Left cardiac atrium (tissue), 4 donors: ENCODE measurements at regions of chr14 and their contacts with region 1.

Region 1: DNA sequence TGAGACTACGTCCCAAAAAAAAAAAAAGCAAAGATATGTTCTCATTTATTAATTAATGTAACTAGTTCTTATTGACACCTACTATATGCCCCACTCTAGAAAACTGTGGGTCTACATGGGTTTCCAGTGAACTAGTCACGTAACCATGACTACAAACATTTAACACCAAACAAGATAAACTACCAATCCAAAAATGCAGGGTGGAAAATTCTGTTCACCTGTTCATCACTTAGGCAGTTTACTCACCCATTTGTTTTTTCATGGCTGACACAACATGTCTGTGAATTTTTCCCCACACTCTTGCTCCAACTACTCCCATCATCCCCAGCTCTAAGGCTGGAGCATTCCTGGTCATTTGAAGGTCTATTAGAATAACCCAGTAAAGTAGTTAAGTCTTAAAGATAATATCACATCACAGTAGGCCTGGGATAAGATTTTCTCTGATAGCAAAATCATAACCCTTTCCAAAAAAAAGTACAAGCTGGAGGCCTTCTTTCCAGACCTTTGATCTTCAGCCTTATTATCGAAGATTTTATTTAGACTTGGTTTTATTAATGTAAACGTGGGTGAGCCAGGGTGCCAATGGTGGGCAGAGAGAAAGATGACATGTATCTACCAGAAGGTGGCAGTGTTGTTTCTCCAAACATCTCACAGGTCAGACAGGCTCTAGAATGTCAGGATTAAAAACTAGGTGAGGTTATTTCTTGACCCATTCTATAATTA is 61.6 kb upstream of the DAAM1 start:
- DNase-seq: no peak
- ATAC-seq: peak; percentile 83 to 89

Region 2: GRCh38 chr14:58501214-58501816 is 625.6 kb before region 1 on chr14:
- intact Hi-C with region 1: loop called in 1 of 2 experiments (anchors 2 kb)
- DNase-seq: no peak
- ATAC-seq: peak; percentile 54 to 59

Region 3: GRCh38 chr14:58637391-58638230 is 489.3 kb before region 1 on chr14 and contains the start of gene DACT1:
- intact Hi-C with region 1: loop called in 1 of 2 experiments (anchors 10 kb)
- DNase-seq: peak; percentile 79
- ATAC-seq: peak; percentile 83 to 87
- total RNA-seq, gene DACT1: 7.0 to 10.3 TPM

Region 4: GRCh38 chr14:59262717-59263454 is 136.0 kb after region 1 on chr14:
- intact Hi-C with region 1: no loop called
- DNase-seq: no peak
- ATAC-seq: peak; percentile 31 to 50

Region 5: DNA sequence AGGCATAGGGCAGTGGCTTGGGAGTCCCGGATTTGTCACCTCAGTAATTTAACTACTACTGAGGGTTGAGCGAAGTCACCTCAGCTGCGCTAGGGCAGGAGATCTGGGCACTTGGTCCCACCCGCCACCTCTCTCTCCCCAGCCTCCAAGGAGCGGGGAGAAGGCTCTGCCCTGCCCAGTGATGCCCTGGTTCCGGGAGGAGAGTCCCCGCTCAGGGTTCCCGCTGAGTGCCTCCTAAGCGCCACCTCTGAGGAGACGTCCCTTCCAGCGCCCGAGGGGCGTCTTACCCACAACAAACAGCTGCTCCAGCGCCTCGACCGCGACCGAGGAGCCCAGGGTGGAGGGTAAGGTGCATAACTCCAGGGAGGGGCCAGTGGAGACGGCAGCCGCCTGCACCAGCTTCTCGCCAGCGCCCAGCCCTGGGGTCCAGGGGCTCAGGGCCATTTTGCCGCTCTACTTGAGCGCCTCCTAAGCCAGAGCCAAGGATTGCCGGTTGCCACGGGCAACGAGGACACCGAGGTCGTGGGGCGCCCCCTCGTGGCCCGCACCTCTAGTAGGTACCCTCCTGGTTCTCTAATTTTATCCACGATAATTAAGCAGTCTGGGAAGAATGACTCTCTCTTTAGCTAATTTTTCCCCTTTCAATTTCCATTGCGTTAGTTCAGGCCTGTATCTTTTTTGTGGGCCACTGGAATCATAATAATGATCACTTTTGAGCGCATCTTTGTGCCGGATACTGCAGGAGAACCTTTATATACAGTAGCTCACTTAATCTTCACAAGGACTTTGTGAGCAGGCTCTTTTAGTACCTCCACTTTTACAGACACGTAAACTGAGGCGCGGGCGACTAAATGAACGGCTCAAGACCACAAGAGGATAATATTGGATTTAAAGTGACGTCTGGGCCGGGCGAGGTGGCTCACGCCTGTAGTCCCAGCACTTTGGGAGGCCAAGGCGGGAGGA is 449.7 kb after region 1 on chr14 and contains the start of gene CCDC175:
- intact Hi-C with region 1: loop called in 1 of 2 experiments (anchors 10 kb)
- DNase-seq: peak; percentile 91
- ATAC-seq: peak; percentile 91 to 98
- total RNA-seq, gene CCDC175: not detected